PC-3 (cell line): ENCODE measurements at regions of chr7 and their contacts with region 1.

Region 1: DNA sequence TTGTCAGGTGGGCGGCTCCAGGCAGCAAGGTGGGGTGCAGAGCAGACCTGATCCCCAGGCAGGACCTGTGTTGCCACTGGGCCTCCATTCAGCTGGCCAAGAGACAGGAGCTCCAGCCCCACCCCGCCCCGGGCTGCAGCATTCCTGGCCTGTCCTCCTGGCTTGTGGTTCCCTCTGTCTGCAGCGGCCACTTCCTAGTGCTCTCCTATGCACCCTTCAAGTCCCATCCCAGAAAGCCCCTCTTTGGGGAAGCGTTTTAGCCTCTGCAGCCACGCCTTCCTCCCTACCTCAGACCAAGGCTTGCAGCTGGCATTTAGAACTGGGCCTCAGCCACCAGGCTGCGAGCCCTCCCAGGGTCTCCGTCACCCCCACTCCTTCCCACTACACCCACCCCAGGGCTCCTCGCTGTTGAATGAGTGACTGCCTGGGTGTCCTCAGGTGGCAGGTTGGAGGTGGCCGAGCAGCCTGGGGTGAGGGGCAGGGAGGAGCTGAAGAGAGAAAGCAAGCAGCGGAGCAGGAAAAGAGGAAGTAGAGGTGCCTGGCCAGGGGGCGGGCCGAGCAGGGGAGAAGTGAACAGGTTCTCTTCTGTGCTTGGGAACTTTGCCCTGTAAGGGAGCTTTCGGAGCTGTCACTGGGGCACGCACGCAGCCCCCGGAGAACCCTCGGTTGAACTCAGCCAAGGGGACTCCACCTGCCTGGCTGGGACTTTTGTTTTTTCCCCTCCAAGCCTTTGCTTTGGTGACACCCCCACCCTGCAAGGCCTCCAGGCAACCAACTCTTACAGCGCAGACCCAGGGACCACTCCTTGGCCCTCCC is 109.1 kb upstream of the TNRC18 start:
- DNase-seq: no peak
- ATAC-seq: peak; percentile 6; the same call in 1 of the 2 replicates
- H3K4me3 ChIP-seq: no peak overlapping the region
- H3K27ac ChIP-seq: no peak overlapping the region
- H3K4me1 ChIP-seq: peaks cover 22% of the 10 kb centered on the region
- H3K27me3 ChIP-seq: no peaks in the 10 kb centered on the region
- CTCF ChIP-seq: no peak

Region 2: GRCh38 chr7:5477723-5478531 is 54.8 kb before region 1 on chr7:
- CTCF ChIA-PET with region 1: no interaction called
- POLR2A ChIA-PET with region 1: no interaction called
- intact Hi-C with region 1: no loop called
- DNase-seq: no peak
- ATAC-seq: peak; percentile 47; the same call in 1 of the 2 replicates
- H3K4me3 ChIP-seq: no peak overlapping the region
- H3K27ac ChIP-seq: no peak overlapping the region
- H3K4me1 ChIP-seq: no peaks in the 10 kb centered on the region
- H3K27me3 ChIP-seq: no peaks in the 10 kb centered on the region
- CTCF ChIP-seq: 0 out of 2 replicates have a peak, but pooled peaks have one; percentile 11

Region 3: GRCh38 chr7:5514440-5515035 is 18.2 kb before region 1 on chr7:
- CTCF ChIA-PET with region 1: no interaction called
- POLR2A ChIA-PET with region 1: interaction called, 53 read pairs
- intact Hi-C with region 1: no loop called
- DNase-seq: peak; percentile 46
- ATAC-seq: peak; percentile 1
- H3K4me3 ChIP-seq: peak overlapping the region; percentile 100
- H3K27ac ChIP-seq: peak overlapping the region; percentile 94
- H3K4me1 ChIP-seq: peaks cover 25% of the 10 kb centered on the region
- H3K27me3 ChIP-seq: no peaks in the 10 kb centered on the region
- CTCF ChIP-seq: no peak